SK-N-SH (cell line): ENCODE measurements at regions of chr7 and their contacts with region 1.

Region 1: DNA sequence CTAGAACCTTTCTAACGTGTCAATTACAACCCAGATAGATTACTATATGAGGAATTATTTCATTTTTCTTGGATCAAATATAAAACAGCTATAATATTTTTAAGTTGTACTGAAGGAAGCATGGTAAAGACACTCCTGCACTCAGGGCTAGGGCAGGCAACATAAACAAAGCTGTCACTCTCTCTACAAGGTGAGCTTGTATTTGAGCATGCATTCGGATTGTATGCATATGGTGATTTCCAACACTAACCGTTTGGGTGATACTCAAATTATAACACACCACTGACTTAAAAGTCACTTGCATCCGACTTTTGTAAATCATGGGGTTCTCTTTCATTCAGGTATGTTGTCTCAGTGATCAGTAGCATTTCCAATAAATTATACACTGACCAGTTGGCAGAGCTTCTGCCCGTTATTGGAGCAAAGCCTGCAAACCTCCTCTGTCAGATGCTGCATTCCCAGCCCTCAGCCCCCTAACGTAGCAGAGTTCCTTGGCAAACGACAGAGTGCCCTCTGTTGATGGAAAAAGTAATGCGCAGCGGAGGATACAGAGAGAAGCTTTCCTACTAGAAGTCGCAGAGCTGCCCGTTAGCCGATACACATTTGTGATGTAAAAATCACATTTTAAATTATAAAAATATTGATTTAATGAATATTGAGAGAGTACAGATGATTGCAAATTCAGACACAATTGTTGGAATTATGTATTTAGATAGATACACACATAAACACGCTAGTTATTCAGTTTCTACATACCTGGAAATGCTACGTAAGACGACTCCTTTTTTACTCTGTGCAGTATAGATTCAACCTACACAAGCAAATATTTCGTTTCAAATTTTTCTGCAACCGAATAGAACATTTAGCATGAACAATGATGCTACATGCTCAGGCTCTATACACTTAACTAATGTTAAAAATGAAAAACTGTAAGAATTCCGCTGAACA is 173.9 kb upstream of the SP4 start:
- DNase-seq: peak; percentile 62
- H3K4me3 ChIP-seq: no peak overlapping the region; a peak in 1 of 4 replicates
- H3K27ac ChIP-seq: no peak overlapping the region
- H3K4me1 ChIP-seq: no peaks in the 10 kb centered on the region
- H3K27me3 ChIP-seq: peaks cover 32% of the 10 kb centered on the region; the same call in 1 of the 2 replicates
- CTCF ChIP-seq: peak; percentile 73
- EP300 ChIP-seq: no peak
- RAD21 ChIP-seq: peak; percentile 70

Region 2: DNA sequence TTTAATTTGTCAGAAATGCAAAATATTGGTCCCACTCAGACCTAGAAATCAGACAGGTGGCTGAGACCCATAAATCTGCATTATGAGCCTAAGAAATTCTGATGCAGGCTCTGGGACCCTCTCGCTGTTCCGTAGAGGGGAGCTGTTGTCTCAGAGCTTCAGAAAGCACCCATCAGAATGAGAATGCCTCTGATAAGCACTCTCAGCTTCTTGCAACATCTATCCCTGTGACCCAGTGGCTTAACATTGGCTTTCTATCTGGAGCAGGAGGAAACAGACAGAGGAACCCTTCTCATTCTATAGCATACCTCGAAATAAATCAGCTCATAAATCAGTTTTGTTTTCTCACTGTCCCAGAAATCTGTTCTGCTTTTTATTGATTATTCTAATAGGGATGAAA is 10.7 kb before region 1 on chr7:
- CTCF ChIA-PET with region 1: interaction called, 11 read pairs
- POLR2A ChIA-PET with region 1: no interaction called
- DNase-seq: no peak
- H3K4me3 ChIP-seq: no peak overlapping the region
- H3K27ac ChIP-seq: no peak overlapping the region
- H3K4me1 ChIP-seq: no peaks in the 10 kb centered on the region
- H3K27me3 ChIP-seq: no peaks in the 10 kb centered on the region; the same call in 1 of the 2 replicates
- CTCF ChIP-seq: no peak
- EP300 ChIP-seq: no peak
- RAD21 ChIP-seq: no peak

Region 3: DNA sequence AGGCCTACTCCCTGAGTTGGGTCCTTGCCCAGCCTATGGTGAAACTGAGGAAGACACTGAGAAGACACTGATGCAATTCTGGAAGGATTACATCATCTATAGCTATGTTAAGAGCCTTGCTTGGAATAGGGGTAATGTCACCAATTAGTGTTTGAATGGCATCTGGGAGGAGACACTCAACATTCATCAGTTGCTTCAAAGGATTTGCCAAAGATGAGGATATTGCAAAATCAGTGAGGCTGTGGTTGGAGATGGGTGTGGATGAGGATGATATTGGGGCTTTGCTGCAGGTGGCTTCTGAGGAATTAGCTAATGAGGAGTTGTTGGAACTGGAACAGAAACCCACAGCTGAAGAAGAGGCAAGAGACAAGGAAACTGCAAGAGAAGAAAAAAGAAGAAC is 27.2 kb after region 1 on chr7:
- CTCF ChIA-PET with region 1: interaction called, 11 read pairs
- POLR2A ChIA-PET with region 1: no interaction called
- DNase-seq: no peak
- H3K4me3 ChIP-seq: no peak overlapping the region
- H3K27ac ChIP-seq: no peak overlapping the region
- H3K4me1 ChIP-seq: no peaks in the 10 kb centered on the region
- H3K27me3 ChIP-seq: peaks cover under 1% of the 10 kb centered on the region; the same call in 1 of the 2 replicates
- CTCF ChIP-seq: no peak
- EP300 ChIP-seq: no peak
- RAD21 ChIP-seq: no peak

Region 4: GRCh38 chr7:21486511-21486910 is 232.5 kb after region 1 on chr7:
- CTCF ChIA-PET with region 1: no interaction called
- POLR2A ChIA-PET with region 1: no interaction called
- DNase-seq: no peak
- H3K4me3 ChIP-seq: no peak overlapping the region
- H3K27ac ChIP-seq: no peak overlapping the region
- H3K4me1 ChIP-seq: no peaks in the 10 kb centered on the region; a peak in 1 of 4 replicates
- H3K27me3 ChIP-seq: no peaks in the 10 kb centered on the region
- CTCF ChIP-seq: no peak
- EP300 ChIP-seq: no peak
- RAD21 ChIP-seq: no peak

Region 5: DNA sequence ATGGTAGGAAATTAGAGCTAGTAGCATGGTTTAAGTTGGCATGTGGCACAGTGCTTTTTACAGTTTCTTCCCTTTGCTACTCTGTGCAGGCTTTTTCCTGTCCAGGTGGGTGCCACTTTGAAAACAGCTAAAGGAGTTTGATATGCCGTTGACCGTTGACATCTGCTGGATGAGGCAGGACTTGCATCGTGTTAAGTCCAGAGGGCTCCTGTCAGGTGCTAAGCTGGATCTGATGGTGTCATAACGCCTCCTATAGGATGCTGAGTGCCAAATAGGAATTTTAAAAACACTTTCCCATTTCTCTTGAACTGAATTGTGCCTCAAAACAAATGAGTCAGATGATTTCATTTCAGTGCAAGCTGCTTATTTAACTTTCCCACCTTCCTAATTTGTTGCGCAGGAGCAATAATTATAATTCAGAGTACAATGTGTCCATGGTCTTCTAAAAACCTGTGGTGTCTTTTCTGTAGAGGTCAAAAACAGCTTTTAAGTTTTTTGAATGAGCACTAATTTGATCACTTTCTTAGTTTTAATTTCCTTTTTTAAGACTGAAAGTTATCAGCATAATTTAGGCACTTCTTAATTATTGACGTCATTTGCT is 513.4 kb after region 1 on chr7:
- CTCF ChIA-PET with region 1: interaction called, 15 read pairs
- POLR2A ChIA-PET with region 1: no interaction called
- DNase-seq: peak; percentile 44
- H3K4me3 ChIP-seq: peak overlapping the region in 1 of 2 experiments; percentile 12; a peak in 1 of 4 replicates
- H3K27ac ChIP-seq: no peak overlapping the region
- H3K4me1 ChIP-seq: no peaks in the 10 kb centered on the region; a peak in 1 of 4 replicates
- H3K27me3 ChIP-seq: peaks cover 10% of the 10 kb centered on the region; the same call in 1 of the 2 replicates
- CTCF ChIP-seq: peak; percentile 71
- EP300 ChIP-seq: no peak
- RAD21 ChIP-seq: peak; percentile 79

Region 6: GRCh38 chr7:22082886-22083703 is 829.1 kb after region 1 on chr7:
- CTCF ChIA-PET with region 1: interaction called, 16 read pairs
- POLR2A ChIA-PET with region 1: no interaction called
- DNase-seq: peak; percentile 97
- H3K4me3 ChIP-seq: peak overlapping the region; percentile 60 to 78
- H3K27ac ChIP-seq: peak overlapping the region; percentile 51 to 56; a peak in 2 of 4 replicates
- H3K4me1 ChIP-seq: peaks cover 0 to 12% of the 10 kb centered on the region in 2 experiments; a peak in 2 of 4 replicates
- H3K27me3 ChIP-seq: peaks cover 9% of the 10 kb centered on the region; the same call in 1 of the 2 replicates
- CTCF ChIP-seq: peak; percentile 98
- EP300 ChIP-seq: no peak; a peak in 1 of 4 replicates
- RAD21 ChIP-seq: peak; percentile 81